ENCODE measurements at regions of chr21 and their contacts with region 1.

Region 1: DNA sequence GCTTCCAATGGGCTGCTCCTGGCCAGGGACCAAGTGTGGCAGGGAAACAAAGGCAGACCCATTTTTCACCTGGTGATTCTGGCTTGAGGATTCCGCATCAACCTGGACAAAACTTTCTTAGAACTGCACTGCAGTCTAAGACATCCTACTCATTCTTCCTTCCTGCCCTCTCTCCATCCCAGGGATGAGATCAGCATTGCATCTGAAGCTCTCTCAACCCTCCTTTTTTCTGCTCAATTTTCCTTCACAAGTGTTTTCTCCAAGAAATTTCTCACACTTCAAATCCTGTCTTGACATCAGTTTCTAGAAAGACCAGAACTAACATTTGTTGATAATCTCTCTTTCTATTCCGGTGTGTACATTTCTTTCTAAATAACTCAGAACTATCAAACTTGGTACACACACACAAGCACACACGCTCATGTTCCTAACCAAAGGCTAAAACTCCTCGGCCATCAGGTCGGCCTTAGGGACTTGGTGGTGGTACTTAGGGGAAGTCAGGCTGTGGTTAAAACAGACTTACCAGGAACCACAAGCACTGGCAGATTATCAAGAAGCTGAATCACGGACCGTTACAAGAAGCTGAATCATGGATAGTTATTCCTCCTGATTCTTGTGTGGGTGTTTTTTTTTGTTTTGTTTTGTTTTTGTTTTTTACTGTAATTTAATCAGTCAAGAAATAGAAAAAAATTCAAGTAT is 21.0 kb upstream of the CXADR start:
- DNase-seq: peak; percentile 93
- H3K4me3 ChIP-seq: peak overlapping the region in 1 of 3 experiments; percentile 2
- H3K27ac ChIP-seq: peak overlapping the region; percentile 72
- H3K4me1 ChIP-seq: peaks cover 24% of the 10 kb centered on the region
- H3K27me3 ChIP-seq: peaks cover 19% of the 10 kb centered on the region
- CTCF ChIP-seq: no peak

Region 2: DNA sequence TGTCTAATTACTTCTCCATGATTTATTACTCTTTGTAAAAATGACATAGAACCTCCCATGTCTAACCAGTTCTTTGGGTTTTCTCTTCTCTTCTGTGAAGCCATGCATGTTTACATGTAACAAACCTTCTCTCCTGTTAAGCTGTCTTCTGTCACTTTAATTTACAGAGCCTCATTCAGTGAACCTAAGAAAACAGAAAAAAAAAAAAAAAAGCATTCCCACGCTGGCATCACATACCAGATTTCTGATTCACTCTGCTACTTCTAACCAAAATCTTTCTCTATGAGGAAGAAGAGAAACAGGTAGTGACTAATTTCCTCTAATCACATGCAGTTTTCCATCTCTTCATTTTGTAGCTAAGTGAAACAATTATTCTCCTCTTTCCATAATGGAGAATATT is 120.4 kb before region 1 on chr21:
- CTCF ChIA-PET with region 1: no interaction called
- dilution Hi-C with region 1: no loop called
- in situ Hi-C with region 1: no loop called
- intact Hi-C with region 1: no loop called
- DNase-seq: peak; percentile 80
- H3K4me3 ChIP-seq: no peak overlapping the region
- H3K27ac ChIP-seq: no peak overlapping the region
- H3K4me1 ChIP-seq: no peaks in the 10 kb centered on the region
- H3K27me3 ChIP-seq: no peaks in the 10 kb centered on the region
- CTCF ChIP-seq: no peak

Region 3: DNA sequence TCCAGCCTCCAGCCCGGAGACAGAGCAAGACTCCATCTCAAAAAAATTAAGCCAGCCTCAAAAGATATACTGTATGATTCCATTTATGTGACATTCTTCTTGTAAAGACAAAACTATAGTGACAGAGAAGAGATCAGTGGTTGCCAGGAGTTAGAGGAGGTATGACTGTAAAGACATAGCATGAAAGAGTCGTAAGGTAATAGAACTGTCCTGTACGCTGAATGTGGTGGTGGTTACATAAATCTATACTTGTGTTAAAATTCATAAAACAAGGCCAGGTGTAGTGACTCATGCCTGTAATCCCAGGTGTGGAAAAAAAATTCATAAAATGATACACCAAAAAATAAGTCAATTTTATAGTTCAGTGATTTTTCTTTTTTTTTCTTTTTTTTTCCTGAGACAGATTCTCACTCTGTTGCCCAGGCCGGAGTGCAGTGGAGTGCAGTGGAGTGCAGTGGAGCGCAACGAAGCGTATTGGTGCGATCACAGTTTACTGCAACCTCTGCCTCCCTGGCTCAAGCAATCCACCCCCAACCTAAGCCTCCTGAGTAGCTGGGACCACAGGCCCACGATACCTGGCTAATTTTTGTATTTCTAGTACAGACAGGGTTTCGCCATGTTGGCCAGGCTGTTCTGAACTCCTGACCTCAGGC is 63.9 kb before region 1 on chr21:
- CTCF ChIA-PET with region 1: no interaction called
- dilution Hi-C with region 1: loop called (anchors 5 kb)
- in situ Hi-C with region 1: no loop called
- intact Hi-C with region 1: no loop called
- DNase-seq: no peak
- H3K4me3 ChIP-seq: no peak overlapping the region
- H3K27ac ChIP-seq: no peak overlapping the region
- H3K4me1 ChIP-seq: no peaks in the 10 kb centered on the region
- H3K27me3 ChIP-seq: no peaks in the 10 kb centered on the region
- CTCF ChIP-seq: no peak

Region 4: GRCh38 chr21:17454315-17455027 is 37.4 kb before region 1 on chr21:
- CTCF ChIA-PET with region 1: no interaction called
- dilution Hi-C with region 1: no loop called
- in situ Hi-C with region 1: no loop called
- intact Hi-C with region 1: loop called (anchors 5 kb)
- DNase-seq: peak; percentile 88
- H3K4me3 ChIP-seq: no peak overlapping the region
- H3K27ac ChIP-seq: no peak overlapping the region
- H3K4me1 ChIP-seq: peaks cover 3% of the 10 kb centered on the region
- H3K27me3 ChIP-seq: no peaks in the 10 kb centered on the region
- CTCF ChIP-seq: no peak

Region 5: DNA sequence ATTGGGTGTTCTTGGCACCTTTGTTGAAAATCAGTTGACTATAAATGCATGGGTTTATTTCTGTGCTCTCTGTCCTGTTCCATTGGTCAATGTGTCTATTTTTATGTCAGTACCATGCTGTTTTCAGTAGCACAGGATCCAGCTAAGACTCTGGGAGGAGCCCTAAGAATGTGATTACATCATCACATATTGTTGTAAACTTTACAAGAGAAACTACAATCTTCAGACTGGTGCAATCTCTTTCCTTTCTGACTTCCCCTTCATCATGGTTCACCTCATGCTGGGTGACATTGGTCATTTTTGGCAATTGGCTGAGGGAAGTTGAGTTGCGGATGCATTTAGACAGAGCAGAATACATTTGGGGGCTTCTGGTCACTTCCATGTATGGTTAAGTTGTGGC is 238.9 kb after region 1 on chr21:
- CTCF ChIA-PET with region 1: no interaction called
- dilution Hi-C with region 1: no loop called
- in situ Hi-C with region 1: no loop called
- intact Hi-C with region 1: no loop called
- DNase-seq: peak; percentile 16
- H3K4me3 ChIP-seq: no peak overlapping the region
- H3K27ac ChIP-seq: no peak overlapping the region
- H3K4me1 ChIP-seq: no peaks in the 10 kb centered on the region
- H3K27me3 ChIP-seq: no peaks in the 10 kb centered on the region
- CTCF ChIP-seq: no peak

Measured in mammary epithelial cell (primary cell).